ENCODE measurements at regions of chr1 and their contacts with region 1.

Region 1: DNA sequence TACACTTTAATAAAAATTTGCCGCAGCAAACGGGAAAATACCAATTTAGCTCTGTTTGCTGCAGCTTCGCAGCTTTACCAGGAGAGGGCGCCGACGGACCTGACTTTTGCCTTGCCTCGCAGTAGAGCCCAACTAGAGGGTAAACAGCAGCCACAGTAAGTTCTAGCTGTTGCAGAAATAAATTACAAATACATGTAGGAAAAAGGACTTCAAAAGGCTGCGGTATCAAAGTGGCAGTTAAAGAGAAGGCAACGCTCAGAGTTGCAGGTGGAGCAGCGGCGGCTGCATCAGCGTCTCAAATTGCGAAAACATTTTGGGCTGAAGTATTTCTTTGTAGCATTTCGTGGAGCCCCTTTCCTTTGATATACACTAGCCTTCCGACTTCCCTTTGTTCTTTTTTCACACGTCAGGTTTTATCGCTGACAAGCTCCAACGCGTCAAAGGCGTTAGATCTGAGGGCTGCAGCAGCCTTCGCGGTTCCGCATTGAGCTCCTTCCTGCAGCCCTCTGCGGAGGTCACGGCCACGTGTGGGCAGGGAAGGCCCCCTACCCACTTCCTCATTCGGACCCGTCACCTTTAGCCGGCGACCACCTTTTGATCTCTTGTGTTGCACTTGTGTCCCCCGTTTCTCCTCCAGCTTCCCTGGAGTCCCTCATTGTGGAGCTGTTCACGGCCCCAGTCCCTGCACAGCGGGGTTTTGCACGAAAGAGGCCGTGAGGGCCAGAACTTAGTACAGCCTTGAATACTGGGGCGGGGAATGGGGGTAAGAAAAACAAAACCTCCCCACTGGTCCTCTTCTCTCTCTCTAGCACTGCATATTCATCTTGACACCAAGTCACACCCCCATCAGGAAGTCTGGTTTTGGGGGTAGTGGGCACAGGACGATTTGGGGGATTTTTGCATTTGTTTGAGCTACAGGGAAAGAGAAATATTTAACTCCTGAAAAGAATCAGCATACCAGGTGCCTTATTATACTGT is 72.8 kb downstream of the S1PR1 start:
- DNase-seq: no peak

Region 2: DNA sequence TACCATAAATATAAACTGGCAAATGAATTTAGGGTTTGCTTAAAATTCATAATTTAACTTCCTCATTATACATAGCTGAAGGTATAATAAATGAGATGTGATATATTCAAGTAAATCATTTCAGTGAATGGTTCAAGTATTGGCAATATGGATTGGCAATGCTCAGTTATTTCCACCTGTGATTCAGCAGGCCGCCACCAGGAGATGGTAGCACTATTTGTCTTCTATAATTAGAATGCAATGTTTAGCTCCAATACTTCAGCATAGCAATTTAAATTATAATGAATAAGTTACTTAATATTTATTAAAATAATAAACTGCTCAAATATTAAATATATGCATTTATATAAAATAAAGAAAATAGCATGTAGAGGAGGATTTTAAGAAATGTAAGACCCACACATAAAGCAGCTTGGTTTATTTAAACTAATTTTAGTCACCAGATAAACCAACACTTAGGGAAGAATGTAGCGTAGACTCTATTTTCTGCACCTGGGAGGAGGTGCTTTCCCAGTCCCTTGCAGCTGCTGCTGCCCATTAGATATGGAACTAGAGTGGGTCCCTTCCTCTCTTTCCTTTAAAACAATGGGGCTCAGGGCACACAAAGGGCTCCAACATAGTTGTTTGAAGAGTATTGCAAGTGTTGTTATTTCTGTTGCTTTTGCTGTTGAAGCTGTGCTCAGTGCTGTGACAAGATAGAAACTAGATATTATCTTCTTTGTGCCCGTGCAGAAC is 1983.2 kb before region 1 on chr1:
- intact Hi-C with region 1: loop called in 1 of 2 experiments (anchors 10 kb)
- DNase-seq: no peak

Region 3: GRCh38 chr1:101325144-101325543 is 15.5 kb after region 1 on chr1:
- intact Hi-C with region 1: no loop called
- DNase-seq: no peak

Region 4: GRCh38 chr1:101357444-101357986 is 47.9 kb after region 1 on chr1:
- intact Hi-C with region 1: loop called in 1 of 2 experiments (anchors 2 kb)
- DNase-seq: no peak

Region 5: DNA sequence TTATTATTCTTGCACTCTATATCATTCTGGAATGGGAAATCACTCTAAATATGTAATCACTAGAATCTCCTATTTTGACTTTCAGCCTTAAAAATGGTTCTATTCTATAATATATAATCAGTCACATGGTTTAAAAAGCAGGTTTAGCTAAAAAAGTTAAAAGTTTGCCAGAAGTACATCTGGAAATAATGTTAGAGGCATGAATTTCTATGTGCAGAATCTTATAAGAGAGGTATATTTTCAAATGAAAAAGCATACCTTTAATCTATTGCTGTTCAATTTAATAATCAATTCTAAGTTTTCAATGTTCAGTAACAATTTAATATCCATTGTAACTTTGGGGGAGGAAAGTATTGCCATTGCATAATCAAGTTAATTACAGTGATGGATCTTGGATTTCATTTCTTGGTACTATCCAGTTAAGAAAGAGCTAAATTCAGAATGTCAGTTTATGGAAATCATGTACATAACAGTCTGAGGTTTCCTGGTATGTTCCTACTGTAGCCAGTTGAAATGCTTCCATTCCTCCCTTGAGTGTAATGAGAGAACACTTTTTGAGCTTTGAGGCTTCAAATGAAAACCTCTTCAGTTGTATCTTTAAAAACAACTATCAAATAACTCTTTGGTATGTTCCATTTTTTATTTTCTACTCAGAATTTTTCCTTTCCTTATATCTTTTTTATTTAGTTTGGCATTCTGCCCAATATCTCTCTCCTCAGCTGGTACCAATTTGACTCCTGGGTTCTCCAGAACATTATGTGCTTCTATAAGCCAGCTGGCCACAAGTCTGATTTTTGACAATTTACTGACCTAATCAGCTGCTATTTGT is 1974.4 kb after region 1 on chr1:
- intact Hi-C with region 1: no loop called
- DNase-seq: no peak